HEK293 (cell line): ENCODE measurements at regions of chr14 and their contacts with region 1.

Region 1: GRCh38 chr14:105180592-105181548 is at the start of gene NUDT14:
- H3K4me3 ChIP-seq: peak within 1 kb of the TSS; percentile 51
- H3K27ac ChIP-seq: no peak within 1 kb of the TSS
- H3K4me1 ChIP-seq: no peaks in the 10 kb centered on the region
- CTCF ChIP-seq: no peak

Region 2: GRCh38 chr14:105168979-105169507 is 11.8 kb before region 1 on chr14:
- CTCF ChIA-PET with region 1: interaction called, 18 read pairs
- POLR2A ChIA-PET with region 1: interaction called, 9 read pairs
- H3K4me3 ChIP-seq: no peak overlapping the region
- H3K27ac ChIP-seq: peak overlapping the region; percentile 24; the same call in 1 of the 2 replicates
- H3K4me1 ChIP-seq: peaks cover 3% of the 10 kb centered on the region; the same call in 1 of the 2 replicates
- CTCF ChIP-seq: no peak; the same call in 1 of the 2 replicates

Region 3: DNA sequence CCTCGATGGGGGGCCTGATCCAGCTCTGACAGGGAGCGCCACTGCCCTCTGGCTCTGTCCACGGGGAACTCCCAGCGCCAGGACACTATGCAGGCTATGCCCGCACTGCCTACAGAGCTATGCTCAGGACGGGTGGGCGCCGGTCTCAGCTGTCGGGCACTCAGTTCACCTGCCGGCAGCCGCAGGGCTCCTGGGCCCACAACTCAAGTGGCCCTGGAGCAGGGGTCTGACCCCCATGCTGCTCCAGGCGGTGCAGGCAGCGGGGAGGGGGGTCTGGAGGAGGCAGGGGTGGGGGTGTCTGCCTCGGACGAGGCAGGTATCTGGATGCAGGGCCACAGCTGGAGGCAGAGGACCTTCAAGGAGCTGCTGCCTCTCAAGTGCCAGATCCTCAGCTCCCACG is 28.8 kb after region 1 on chr14:
- CTCF ChIA-PET with region 1: no interaction called
- POLR2A ChIA-PET with region 1: no interaction called
- H3K4me3 ChIP-seq: no peak overlapping the region
- H3K27ac ChIP-seq: no peak overlapping the region
- H3K4me1 ChIP-seq: no peaks in the 10 kb centered on the region
- CTCF ChIP-seq: no peak